HCT116 (cell line): ENCODE measurements at regions of chr7 and their contacts with region 1.

Region 1: GRCh38 chr7:18128846-18129245 is 101.2 kb upstream of the PRPS1L1 start:
- DNase-seq: no peak
- ATAC-seq: no peak
- H3K4me3 ChIP-seq: no peak overlapping the region
- H3K27ac ChIP-seq: no peak overlapping the region
- H3K4me1 ChIP-seq: no peaks in the 10 kb centered on the region
- H3K27me3 ChIP-seq: no peaks in the 10 kb centered on the region
- CTCF ChIP-seq: no peak
- POLR2A ChIP-seq: no peak
- RAD21 ChIP-seq: no peak

Region 2: DNA sequence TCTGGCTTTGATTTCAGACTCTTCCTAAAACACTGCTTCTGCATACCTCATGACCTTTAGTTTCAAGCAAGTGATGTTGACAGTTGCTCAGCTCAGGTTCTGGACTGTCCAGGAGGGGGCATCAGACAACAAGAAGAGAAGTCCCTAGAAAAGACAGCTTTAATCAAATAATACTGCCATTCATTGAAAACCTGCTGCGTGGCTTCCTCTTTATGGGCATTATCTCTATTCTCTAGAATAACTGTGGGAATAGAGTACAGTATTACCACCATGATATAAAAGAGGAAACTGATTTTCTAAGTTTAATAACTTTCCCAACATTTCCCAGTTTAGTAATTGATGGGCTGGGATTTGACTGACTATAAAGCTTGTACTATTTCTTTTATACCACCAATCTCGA is 358.9 kb before region 1 on chr7:
- CTCF ChIA-PET with region 1: no interaction called
- POLR2A ChIA-PET with region 1: no interaction called
- RAD21 ChIA-PET with region 1: no interaction called
- intact Hi-C with region 1: no loop called
- DNase-seq: peak; percentile 59
- ATAC-seq: peak; percentile 91
- H3K4me3 ChIP-seq: no peak overlapping the region
- H3K27ac ChIP-seq: no peak overlapping the region
- H3K4me1 ChIP-seq: no peaks in the 10 kb centered on the region
- H3K27me3 ChIP-seq: no peaks in the 10 kb centered on the region
- CTCF ChIP-seq: peak; percentile 75 to 89 (median 76)
- POLR2A ChIP-seq: no peak
- RAD21 ChIP-seq: peak; percentile 89

Region 3: DNA sequence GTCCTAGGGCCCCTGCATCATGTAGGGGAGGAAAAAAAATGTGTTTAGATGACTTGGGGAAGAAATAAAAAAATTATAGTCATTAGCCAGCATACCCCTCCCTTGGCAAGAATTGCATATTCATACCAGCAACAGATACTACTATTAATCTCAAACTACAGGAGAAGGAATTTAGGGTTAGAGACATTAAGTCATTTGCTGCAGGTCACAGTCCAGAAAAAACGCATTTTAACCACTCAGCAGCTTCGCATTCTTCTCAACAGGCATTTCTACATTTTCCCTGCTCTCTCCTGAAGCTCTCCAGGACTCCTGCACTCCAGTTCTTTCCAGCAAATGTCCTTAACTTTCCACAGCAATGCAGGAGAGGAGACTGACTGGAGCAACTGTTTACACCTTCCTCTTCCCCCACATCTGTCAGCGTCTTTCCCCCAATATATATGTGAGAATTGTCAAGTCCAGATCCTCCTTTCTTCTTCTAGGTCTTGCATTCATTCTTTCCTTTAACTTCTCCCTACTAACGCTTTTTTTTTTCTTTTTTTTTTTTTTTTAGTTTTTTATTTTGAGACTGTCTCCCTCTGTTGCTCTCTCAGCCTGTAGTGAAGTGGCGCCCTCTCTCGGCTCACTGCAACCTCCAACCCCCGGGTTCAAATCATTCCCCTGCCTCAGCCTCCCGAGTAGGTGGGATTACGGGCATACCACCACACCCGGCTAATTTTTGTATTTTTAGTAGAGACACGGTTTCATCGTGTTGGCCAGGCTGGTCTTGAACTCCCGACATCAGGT is 136.8 kb before region 1 on chr7:
- CTCF ChIA-PET with region 1: no interaction called
- POLR2A ChIA-PET with region 1: no interaction called
- RAD21 ChIA-PET with region 1: no interaction called
- intact Hi-C with region 1: no loop called
- DNase-seq: no peak
- ATAC-seq: no peak; the same call in 1 of the 2 replicates
- H3K4me3 ChIP-seq: no peak overlapping the region
- H3K27ac ChIP-seq: no peak overlapping the region
- H3K4me1 ChIP-seq: no peaks in the 10 kb centered on the region
- H3K27me3 ChIP-seq: no peaks in the 10 kb centered on the region
- CTCF ChIP-seq: peak; percentile 17 to 39 (median 36); a peak in 4 of 6 replicates
- POLR2A ChIP-seq: no peak
- RAD21 ChIP-seq: peak; percentile 44

Region 4: DNA sequence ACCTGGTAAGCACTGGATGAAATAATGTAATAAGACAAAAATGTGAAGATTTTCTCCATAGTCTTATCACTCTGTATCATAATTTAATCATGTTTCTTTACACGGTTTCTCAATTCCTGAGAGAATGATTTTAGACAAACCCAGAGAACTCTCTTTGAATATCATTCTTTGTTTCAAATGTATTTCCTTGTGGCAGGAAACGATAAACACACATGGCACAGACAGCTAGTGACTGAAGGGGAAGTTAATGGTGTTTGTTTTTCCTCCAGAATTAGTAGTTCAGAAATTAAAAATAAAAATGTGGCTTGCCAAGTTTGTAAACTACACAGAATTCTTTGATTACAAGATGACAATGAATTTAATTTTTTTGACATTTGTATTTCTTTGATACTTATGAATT is 62.5 kb after region 1 on chr7:
- CTCF ChIA-PET with region 1: no interaction called
- POLR2A ChIA-PET with region 1: no interaction called
- RAD21 ChIA-PET with region 1: no interaction called
- intact Hi-C with region 1: loop called (anchors 1 kb)
- DNase-seq: no peak
- ATAC-seq: no peak
- H3K4me3 ChIP-seq: no peak overlapping the region
- H3K27ac ChIP-seq: no peak overlapping the region
- H3K4me1 ChIP-seq: no peaks in the 10 kb centered on the region
- H3K27me3 ChIP-seq: no peaks in the 10 kb centered on the region
- CTCF ChIP-seq: no peak
- POLR2A ChIP-seq: no peak
- RAD21 ChIP-seq: no peak